IMR-90 (cell line): ENCODE measurements at regions of chr4 and their contacts with region 1.

Region 1: DNA sequence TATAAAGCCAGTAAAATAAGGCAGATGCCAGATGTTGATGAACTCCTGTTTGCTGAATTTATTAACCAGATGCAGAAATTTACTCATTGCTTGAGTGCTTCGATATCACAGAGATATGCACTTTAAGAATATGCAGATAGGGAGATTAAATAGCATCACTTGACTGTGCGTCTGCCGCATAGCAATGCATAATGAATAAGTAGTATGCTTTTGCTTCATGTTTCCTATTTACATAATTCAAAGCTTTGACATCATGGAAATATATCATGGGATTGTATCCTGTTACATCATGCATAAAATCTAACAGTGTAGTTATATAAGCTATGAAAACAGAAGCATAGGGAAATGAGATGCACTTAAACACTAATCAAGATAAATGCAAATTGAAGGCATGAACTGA is 45.9 kb downstream of the VEGFC start:
- DNase-seq: peak; percentile 30
- ATAC-seq: no peak
- H3K4me3 ChIP-seq: no peak overlapping the region
- H3K27ac ChIP-seq: no peak overlapping the region
- H3K4me1 ChIP-seq: peaks cover 15% of the 10 kb centered on the region
- H3K27me3 ChIP-seq: no peaks in the 10 kb centered on the region
- CTCF ChIP-seq: no peak
- POLR2A ChIP-seq: no peak
- RAD21 ChIP-seq: no peak

Region 2: DNA sequence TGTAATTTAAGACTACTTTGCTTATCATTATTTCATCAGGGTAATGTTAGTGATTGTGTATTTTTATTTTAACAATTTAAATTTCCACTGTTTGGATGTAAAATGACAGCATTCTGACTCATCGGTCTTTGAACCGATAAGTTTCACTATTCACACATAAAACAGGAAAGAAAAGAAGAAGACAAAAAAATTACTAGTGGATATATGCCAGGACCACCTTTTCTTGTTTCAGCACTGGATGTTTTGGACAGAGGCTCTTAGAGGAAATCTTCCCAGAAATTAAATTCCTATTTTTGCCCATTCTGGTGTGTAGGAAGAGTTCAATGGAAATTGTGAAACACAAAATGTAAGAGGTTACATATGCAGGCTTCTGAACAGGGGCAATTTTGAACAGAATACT is 11.5 kb before region 1 on chr4:
- CTCF ChIA-PET with region 1: no interaction called
- POLR2A ChIA-PET with region 1: no interaction called
- dilution Hi-C with region 1: no loop called
- in situ Hi-C with region 1: no loop called
- intact Hi-C with region 1: loop called (anchors 1 kb)
- DNase-seq: peak; percentile 88
- ATAC-seq: peak; percentile 53
- H3K4me3 ChIP-seq: no peak overlapping the region
- H3K27ac ChIP-seq: no peak overlapping the region
- H3K4me1 ChIP-seq: peaks cover 8% of the 10 kb centered on the region
- H3K27me3 ChIP-seq: no peaks in the 10 kb centered on the region
- CTCF ChIP-seq: no peak
- POLR2A ChIP-seq: no peak
- RAD21 ChIP-seq: no peak